Posterior vena cava (tissue), 2 donors: ENCODE measurements at regions of chr3 and their contacts with region 1.

Region 1: GRCh38 chr3:144502402-144502801 is 530.8 kb downstream of the DIPK2A start:
- DNase-seq: no peak

Region 2: GRCh38 chr3:143380449-143380848 is 1122.0 kb before region 1 on chr3:
- intact Hi-C with region 1: no loop called
- DNase-seq: no peak

Region 3: DNA sequence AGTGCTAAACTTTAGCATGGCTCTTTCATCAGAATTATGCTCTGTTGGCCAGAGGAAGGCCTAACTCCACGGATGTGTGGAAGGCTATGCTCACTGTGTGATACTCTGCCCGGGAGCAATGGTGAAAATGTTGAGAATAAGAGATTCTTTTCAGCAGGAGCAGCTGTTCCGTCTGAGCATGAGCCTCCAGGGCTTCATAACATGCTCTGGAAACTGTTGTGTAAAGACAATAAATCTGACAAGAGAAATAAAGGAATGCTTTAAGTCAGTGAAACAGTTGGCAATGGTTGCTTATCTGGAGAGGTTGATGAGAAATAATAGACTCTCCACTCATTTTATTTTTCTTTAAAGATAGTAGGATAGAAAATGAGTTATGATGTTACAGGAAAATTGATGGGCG is 261.0 kb before region 1 on chr3:
- intact Hi-C with region 1: no loop called
- DNase-seq: no peak

Region 4: GRCh38 chr3:146106986-146107385 is 1604.6 kb after region 1 on chr3:
- intact Hi-C with region 1: loop called in 1 of 2 experiments (anchors 5 kb)
- DNase-seq: no peak